PC-9 (cell line): ENCODE measurements at regions of chr4 and their contacts with region 1.

Region 1: DNA sequence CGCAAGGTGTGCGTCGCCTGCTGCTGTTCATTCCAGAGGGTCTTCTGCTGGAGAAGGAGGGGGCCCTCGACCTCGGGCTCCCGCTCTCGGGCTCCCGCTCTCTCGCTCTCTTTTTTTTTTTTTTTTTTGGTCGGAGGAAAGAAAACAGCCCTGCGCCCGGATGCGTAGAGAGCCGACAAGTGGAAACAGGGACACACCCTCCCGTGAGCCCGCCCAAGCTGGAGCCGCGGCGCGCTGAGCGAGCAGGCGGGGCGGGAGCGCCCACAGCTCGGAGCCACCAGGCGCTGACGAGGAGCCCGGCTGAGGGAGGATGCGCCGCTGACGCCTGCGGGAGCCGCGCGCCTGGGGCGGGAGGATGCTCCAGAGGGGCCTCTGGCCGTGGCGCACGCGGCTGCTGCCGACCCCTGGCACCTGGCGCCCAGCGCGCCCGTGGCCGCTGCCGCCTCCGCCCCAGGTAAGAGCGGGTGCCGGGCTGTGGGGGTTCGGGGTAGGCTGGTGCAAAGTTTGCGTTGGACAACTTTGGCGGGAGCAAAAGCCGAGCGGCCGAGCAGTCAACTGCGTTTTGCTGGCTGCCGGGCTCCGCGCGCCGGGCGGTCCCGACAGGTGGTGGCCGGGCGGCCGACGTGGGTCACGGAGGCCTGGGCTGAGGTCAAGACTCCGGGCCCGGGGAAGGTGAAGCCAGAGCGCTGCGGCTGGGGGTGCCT is at the start of gene MCUB:
- DNase-seq: peak; percentile 70 to 79
- H3K4me3 ChIP-seq: peak within 1 kb of the TSS; percentile 71
- H3K27ac ChIP-seq: peak within 1 kb of the TSS; percentile 26; the same call in 1 of the 2 replicates
- H3K4me1 ChIP-seq: peaks cover 8% of the 10 kb centered on the region
- H3K27me3 ChIP-seq: no peaks in the 10 kb centered on the region
- CTCF ChIP-seq: no peak
- total RNA-seq, gene MCUB: 15.4 and 17.0 TPM in 2 replicates

Region 2: GRCh38 chr4:109022961-109023360 is 537.2 kb before region 1 on chr4:
- CTCF ChIA-PET with region 1: no interaction called
- POLR2A ChIA-PET with region 1: no interaction called
- intact Hi-C with region 1: no loop called
- DNase-seq: no peak
- H3K4me3 ChIP-seq: no peak overlapping the region
- H3K27ac ChIP-seq: no peak overlapping the region
- H3K4me1 ChIP-seq: no peaks in the 10 kb centered on the region
- H3K27me3 ChIP-seq: no peaks in the 10 kb centered on the region
- CTCF ChIP-seq: no peak

Region 3: DNA sequence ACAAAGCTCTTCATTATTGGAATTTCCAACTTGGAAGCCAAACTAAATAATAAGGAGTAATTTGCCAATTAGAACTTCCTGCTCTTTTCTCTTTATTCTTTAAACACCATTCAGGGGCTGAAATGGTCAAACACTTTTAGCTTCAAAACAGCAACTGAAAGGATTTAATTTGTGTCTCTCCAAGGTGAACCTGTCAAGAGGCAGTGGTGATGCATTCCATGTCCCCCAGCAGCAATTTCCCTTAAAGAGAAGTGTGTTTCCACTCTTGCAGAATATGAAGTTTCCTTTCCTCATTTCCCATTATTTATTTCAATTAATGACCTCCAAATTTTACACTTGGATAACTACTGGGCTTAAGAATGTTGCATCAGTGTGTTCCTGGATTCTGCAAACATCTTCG is 413.6 kb before region 1 on chr4:
- CTCF ChIA-PET with region 1: no interaction called
- POLR2A ChIA-PET with region 1: no interaction called
- intact Hi-C with region 1: no loop called
- DNase-seq: no peak
- H3K4me3 ChIP-seq: no peak overlapping the region
- H3K27ac ChIP-seq: no peak overlapping the region
- H3K4me1 ChIP-seq: no peaks in the 10 kb centered on the region
- H3K27me3 ChIP-seq: no peaks in the 10 kb centered on the region
- CTCF ChIP-seq: no peak

Region 4: GRCh38 chr4:109433205-109434006 is 126.7 kb before region 1 on chr4 and contains the start of gene SEC24B:
- CTCF ChIA-PET with region 1: no interaction called
- POLR2A ChIA-PET with region 1: no interaction called
- intact Hi-C with region 1: loop called (anchors 5 kb)
- DNase-seq: peak; percentile 57 to 75
- H3K4me3 ChIP-seq: peak within 1 kb of the TSS; percentile 79
- H3K27ac ChIP-seq: peak within 1 kb of the TSS; percentile 25
- H3K4me1 ChIP-seq: peaks cover 21% of the 10 kb centered on the region
- H3K27me3 ChIP-seq: no peaks in the 10 kb centered on the region
- CTCF ChIP-seq: peak; percentile 62
- total RNA-seq, gene SEC24B: 14.3 and 21.7 TPM in 2 replicates

Region 5: DNA sequence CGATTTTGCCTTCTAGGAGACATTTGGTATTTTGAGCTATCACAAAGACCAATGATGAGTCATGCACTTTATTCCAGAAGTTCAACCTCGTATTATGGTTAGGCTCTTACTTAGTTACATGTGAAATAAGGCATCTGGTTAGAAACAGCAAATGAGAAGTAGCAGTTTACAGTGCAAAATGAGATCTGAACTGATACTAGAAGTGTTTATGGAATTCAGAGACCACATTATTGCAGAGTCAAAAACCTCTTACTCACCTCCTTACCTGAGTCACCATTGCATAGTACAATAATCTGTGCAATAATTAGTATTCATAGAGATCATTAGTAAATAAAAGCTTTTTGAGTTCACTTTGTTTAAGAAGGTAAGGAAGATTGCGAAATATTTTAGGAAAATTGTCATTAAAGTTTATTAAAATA is 87.8 kb before region 1 on chr4:
- CTCF ChIA-PET with region 1: no interaction called
- POLR2A ChIA-PET with region 1: interaction called, 28 read pairs
- intact Hi-C with region 1: no loop called
- DNase-seq: peak in 1 of 2 experiments; percentile 77
- H3K4me3 ChIP-seq: no peak overlapping the region
- H3K27ac ChIP-seq: peak overlapping the region; percentile 70
- H3K4me1 ChIP-seq: peaks cover 13% of the 10 kb centered on the region
- H3K27me3 ChIP-seq: no peaks in the 10 kb centered on the region
- CTCF ChIP-seq: no peak

Region 6: DNA sequence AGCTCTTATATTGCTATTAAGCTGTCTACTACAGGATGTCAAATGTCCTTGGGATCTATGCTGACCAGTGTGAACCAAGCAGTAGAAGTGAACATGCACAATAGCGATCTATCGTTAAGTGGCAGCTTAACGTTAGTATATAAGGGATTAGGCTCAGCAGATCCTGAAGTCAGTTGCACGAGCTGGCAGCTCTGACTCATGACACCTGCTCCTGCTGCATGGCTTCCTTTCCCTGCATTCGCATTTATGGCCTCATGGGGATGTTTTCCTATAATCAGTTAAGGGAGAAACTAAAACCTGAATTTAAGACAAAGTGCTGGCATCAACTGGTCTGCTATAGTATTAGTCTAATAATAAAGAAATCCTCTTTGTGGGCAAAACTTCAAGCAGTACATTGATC is 12.7 kb before region 1 on chr4:
- CTCF ChIA-PET with region 1: no interaction called
- POLR2A ChIA-PET with region 1: interaction called, 11 read pairs
- intact Hi-C with region 1: no loop called
- DNase-seq: no peak
- H3K4me3 ChIP-seq: no peak overlapping the region
- H3K27ac ChIP-seq: no peak overlapping the region
- H3K4me1 ChIP-seq: no peaks in the 10 kb centered on the region
- H3K27me3 ChIP-seq: no peaks in the 10 kb centered on the region
- CTCF ChIP-seq: no peak

Region 7: GRCh38 chr4:109803924-109804571 is 243.9 kb after region 1 on chr4:
- CTCF ChIA-PET with region 1: no interaction called
- POLR2A ChIA-PET with region 1: no interaction called
- intact Hi-C with region 1: loop called (anchors 10 kb)
- DNase-seq: peak; percentile 24 to 42
- H3K4me3 ChIP-seq: no peak overlapping the region
- H3K27ac ChIP-seq: no peak overlapping the region
- H3K4me1 ChIP-seq: no peaks in the 10 kb centered on the region
- H3K27me3 ChIP-seq: no peaks in the 10 kb centered on the region
- CTCF ChIP-seq: peak; percentile 56